ENCODE measurements at regions of chr10 and their contacts with region 1.

Region 1: DNA sequence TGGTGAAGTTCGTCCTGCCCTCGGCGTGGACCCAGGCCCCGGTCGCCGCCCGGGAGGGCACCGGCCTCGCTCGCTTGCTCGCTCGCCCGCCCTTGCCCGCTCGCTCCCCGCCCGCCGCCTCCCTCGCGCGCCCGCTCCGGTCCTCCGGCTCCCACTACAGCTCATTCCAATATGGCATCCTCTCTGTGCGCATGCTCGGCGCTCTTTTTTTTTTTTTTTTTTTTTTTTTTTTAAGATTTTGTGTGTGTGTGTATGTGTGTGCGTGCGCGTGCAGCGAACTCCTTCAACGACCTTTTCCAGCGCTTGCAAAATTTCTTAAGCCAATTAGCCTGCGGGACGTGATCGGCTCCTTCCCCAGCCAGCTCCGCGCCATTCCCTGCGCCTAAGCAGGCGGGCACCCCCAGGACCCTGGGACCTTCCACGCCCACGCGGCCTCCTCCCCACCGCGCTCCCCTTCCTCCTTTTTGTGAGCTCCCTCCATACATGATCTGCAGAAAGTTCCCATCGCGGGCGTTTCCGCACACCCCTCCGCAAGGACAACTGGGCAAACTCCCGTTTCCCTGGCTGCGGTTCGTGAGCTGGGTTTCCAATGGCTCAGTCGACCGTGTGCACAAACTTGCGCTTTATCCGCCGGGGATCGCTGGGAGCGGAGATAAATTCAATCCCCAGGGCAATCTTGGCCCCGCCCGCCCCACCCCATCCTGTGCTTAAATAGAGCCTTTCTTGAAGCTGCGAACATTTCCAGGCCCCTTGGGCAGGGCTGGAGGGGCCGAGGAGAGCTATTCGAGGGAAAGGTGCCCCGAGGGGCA is at the start of gene SFMBT2:
- DNase-seq: peak; percentile 60 to 71 (median 65)
- ATAC-seq: peak; percentile 45 to 67 (median 58)
- H3K4me3 ChIP-seq: peak within 1 kb of the TSS; percentile 52 to 67 (median 66)
- H3K27ac ChIP-seq: peak within 1 kb of the TSS; percentile 46 to 70 (median 60)
- H3K4me1 ChIP-seq: peaks cover 0 to 40% (median 7%) of the 10 kb centered on the region in 4 donors
- H3K27me3 ChIP-seq: peaks cover 0 to 25% of the 10 kb centered on the region in 2 donors
- CTCF ChIP-seq: peak in 1 of 4 donors; percentile 15
- POLR2A ChIP-seq: peak; percentile 23
- total RNA-seq, gene SFMBT2: 1.4 to 3.4 (median 1.8) TPM

Region 2: DNA sequence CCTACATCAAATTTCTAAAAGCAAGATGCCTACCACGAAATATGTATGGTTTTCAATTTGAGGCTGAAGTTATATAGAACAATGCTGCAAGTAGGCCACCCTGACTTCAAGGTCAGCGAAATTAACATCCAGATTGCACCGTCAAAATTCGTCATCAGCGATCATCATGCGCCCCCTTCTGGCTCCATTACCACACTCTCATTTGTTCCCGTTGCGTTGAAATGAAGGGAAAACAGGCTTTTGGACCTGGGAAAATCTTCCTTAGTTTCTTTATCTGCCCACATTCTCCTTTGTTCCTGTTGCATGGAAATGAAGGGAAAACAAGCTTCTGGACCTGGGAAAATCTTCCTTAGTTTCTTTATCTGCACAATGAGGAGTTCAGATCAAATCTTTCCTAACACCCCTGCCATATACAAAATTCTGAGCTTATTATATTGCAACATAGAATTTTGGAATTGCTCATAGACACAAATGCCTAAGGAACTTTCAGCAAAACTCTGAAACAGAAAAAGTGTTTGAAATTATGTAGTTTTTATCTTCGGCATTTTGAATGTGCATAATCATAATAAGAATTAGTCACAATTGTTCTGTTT is 732.8 kb before region 1 on chr10:
- intact Hi-C with region 1: loop called in 1 of 2 experiments (anchors 10 kb)
- DNase-seq: peak in 2 of 3 donors; percentile 27 to 52
- ATAC-seq: peak; percentile 75 to 84 (median 82)
- H3K4me3 ChIP-seq: no peak overlapping the region
- H3K27ac ChIP-seq: no peak overlapping the region
- H3K4me1 ChIP-seq: no peaks in the 10 kb centered on the region
- H3K27me3 ChIP-seq: no peaks in the 10 kb centered on the region
- CTCF ChIP-seq: peak; percentile 53 to 76 (median 71)
- POLR2A ChIP-seq: no peak

Region 3: DNA sequence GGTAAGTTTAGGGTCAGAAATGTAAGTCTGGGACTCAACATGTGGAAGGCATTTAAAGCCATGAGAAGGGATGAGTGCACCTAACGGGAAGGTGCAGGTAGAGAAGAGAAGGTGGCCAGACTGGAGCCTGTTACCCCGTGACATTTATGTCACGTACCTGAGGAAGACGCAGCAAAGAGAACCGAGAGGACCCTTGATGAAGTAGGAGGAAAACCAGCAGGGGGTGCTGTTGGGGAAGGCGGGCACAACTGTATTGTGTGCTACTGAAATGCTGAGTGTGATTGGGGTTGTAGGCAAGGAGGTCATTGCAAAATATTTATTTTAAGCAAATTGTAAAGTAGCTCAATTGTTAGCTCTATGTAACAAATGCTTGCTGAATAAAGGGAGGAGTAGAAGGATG is 492.8 kb before region 1 on chr10:
- intact Hi-C with region 1: loop called in 1 of 2 experiments (anchors 10 kb)
- DNase-seq: no peak
- ATAC-seq: peak; percentile 36 to 43 (median 38)
- H3K4me3 ChIP-seq: no peak overlapping the region
- H3K27ac ChIP-seq: no peak overlapping the region
- H3K4me1 ChIP-seq: no peaks in the 10 kb centered on the region
- H3K27me3 ChIP-seq: no peaks in the 10 kb centered on the region
- CTCF ChIP-seq: peak; percentile 15 to 37 (median 28)
- POLR2A ChIP-seq: no peak

Region 4: GRCh38 chr10:7233259-7234009 is 177.6 kb before region 1 on chr10:
- intact Hi-C with region 1: no loop called
- DNase-seq: no peak
- ATAC-seq: peak; percentile 72 to 86 (median 76)
- H3K4me3 ChIP-seq: no peak overlapping the region
- H3K27ac ChIP-seq: peak overlapping the region in 1 of 3 donors; percentile 36
- H3K4me1 ChIP-seq: peaks cover 0 to 32% (median 3%) of the 10 kb centered on the region in 4 donors
- H3K27me3 ChIP-seq: no peaks in the 10 kb centered on the region
- CTCF ChIP-seq: no peak
- POLR2A ChIP-seq: no peak

Measured in right lobe of liver (tissue), 6 donors.